Activated B cell treated with CpG ODN at 0.5 μM for 24 hours (primary cell): ENCODE measurements at regions of chr11 and their contacts with region 1.

Region 1: GRCh38 chr11:108147150-108147549 is 25.8 kb downstream of the ACAT1 start:
- DNase-seq: no peak
- ATAC-seq: no peak
- H3K4me3 Mint-ChIP-seq: no peak overlapping the region
- H3K27ac Mint-ChIP-seq: no peak overlapping the region
- H3K4me1 Mint-ChIP-seq: no peaks in the 10 kb centered on the region
- H3K27me3 Mint-ChIP-seq: no peaks in the 10 kb centered on the region
- CTCF ChIP-seq: no peak

Region 2: GRCh38 chr11:108160970-108161566 is 13.9 kb after region 1 on chr11:
- CTCF ChIA-PET with region 1: no interaction called
- POLR2A ChIA-PET with region 1: no interaction called
- intact Hi-C with region 1: loop called (anchors 2 kb)
- DNase-seq: no peak
- ATAC-seq: peak; percentile 100
- H3K4me3 Mint-ChIP-seq: no peak overlapping the region
- H3K27ac Mint-ChIP-seq: peak overlapping the region; percentile 87
- H3K4me1 Mint-ChIP-seq: peaks cover 13% of the 10 kb centered on the region
- H3K27me3 Mint-ChIP-seq: no peaks in the 10 kb centered on the region
- CTCF ChIP-seq: no peak

Region 3: GRCh38 chr11:108193725-108194124 is 46.6 kb after region 1 on chr11:
- CTCF ChIA-PET with region 1: no interaction called
- POLR2A ChIA-PET with region 1: no interaction called
- intact Hi-C with region 1: no loop called
- DNase-seq: no peak
- ATAC-seq: no peak
- H3K4me3 Mint-ChIP-seq: no peak overlapping the region
- H3K27ac Mint-ChIP-seq: no peak overlapping the region
- H3K4me1 Mint-ChIP-seq: peaks cover 32% of the 10 kb centered on the region
- H3K27me3 Mint-ChIP-seq: no peaks in the 10 kb centered on the region
- CTCF ChIP-seq: no peak